HCT116 (cell line): ENCODE measurements at regions of chr6 and their contacts with region 1.

Region 1: DNA sequence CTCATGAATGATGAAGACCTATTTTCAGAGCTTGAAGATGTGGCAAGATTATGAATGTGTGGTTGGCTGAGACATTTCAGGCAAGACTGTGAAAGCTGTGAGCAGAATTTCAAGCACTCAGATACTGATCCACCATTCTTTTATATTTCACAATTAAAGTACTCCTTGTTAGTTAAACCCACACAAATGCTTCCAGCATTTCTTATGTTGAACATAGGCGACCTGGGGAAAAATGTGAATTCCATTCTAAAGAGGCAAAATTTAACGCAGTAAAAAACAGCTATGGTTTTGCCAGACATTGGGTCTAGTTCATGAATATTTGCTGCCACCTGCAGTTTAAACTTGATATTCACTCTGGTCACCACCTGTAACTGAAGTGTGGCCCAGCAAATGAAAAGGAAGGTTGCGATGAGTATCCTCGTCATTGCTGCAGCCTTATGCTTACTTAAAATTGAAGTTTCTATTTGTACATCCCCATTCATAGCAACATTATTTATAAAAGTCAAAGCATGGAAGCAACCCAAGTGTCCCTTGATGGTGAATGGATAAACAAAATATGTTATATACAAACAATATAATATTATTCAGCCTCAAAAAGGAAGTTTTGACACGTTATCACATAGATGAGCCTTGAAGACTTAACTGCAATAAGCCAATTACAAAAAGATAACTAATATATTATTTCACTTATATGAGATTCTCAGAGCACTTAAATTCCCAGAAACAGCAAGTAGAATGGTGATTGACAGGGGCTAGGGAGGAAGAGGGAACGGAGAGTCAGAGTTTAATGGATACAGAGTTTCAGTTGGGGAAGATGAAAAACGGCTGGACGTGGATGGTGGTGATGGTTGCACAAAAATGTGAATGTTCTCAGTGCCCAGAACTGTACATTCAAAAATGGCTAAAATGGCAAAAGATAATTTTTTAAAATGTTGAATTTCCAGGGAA is 32.4 kb upstream of the FAM184A start:
- DNase-seq: peak; percentile 44
- ATAC-seq: peak; percentile 96
- H3K4me3 ChIP-seq: no peak overlapping the region
- H3K27ac ChIP-seq: no peak overlapping the region
- H3K4me1 ChIP-seq: no peaks in the 10 kb centered on the region
- H3K27me3 ChIP-seq: no peaks in the 10 kb centered on the region
- CTCF ChIP-seq: peak; percentile 41 to 76 (median 65); a peak in 5 of 6 replicates
- POLR2A ChIP-seq: no peak
- RAD21 ChIP-seq: peak; percentile 91

Region 2: DNA sequence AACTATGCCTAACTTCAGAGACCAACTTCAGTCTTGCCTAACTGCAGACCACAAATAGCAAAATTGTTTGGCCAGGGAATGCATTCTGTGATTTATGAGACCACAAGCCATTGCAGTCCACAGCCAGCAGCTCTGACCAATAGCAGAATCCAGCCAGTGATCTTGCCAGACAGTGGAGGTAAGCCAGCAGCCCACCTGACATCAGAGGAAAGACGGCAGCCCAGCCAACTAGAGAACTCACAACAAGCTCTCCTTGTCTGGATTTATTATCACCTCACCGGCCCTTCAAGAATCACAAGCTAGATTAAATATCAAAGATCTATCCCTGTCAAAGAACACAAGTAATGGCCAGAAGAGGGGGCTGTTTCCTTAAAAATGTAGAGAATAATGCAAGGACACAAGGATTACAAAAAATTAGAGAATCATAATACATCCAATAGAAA is 1270.3 kb before region 1 on chr6:
- CTCF ChIA-PET with region 1: interaction called, 8 read pairs
- POLR2A ChIA-PET with region 1: no interaction called
- RAD21 ChIA-PET with region 1: no interaction called
- intact Hi-C with region 1: loop called (anchors 5 kb)
- DNase-seq: peak; percentile 68
- ATAC-seq: peak; percentile 82
- H3K4me3 ChIP-seq: no peak overlapping the region
- H3K27ac ChIP-seq: no peak overlapping the region
- H3K4me1 ChIP-seq: no peaks in the 10 kb centered on the region
- H3K27me3 ChIP-seq: no peaks in the 10 kb centered on the region
- CTCF ChIP-seq: peak; percentile 41 to 75 (median 73); a peak in 5 of 6 replicates
- POLR2A ChIP-seq: no peak
- RAD21 ChIP-seq: peak; percentile 83

Region 3: GRCh38 chr6:118565311-118565960 is 545.4 kb before region 1 on chr6:
- CTCF ChIA-PET with region 1: interaction called, 10 read pairs
- POLR2A ChIA-PET with region 1: no interaction called
- RAD21 ChIA-PET with region 1: no interaction called
- intact Hi-C with region 1: loop called (anchors 5 kb)
- DNase-seq: peak; percentile 18
- ATAC-seq: peak; percentile 66
- H3K4me3 ChIP-seq: no peak overlapping the region
- H3K27ac ChIP-seq: no peak overlapping the region
- H3K4me1 ChIP-seq: no peaks in the 10 kb centered on the region
- H3K27me3 ChIP-seq: no peaks in the 10 kb centered on the region
- CTCF ChIP-seq: peak; percentile 46 to 53 (median 50); a peak in 5 of 6 replicates
- POLR2A ChIP-seq: no peak
- RAD21 ChIP-seq: peak; percentile 70

Region 4: DNA sequence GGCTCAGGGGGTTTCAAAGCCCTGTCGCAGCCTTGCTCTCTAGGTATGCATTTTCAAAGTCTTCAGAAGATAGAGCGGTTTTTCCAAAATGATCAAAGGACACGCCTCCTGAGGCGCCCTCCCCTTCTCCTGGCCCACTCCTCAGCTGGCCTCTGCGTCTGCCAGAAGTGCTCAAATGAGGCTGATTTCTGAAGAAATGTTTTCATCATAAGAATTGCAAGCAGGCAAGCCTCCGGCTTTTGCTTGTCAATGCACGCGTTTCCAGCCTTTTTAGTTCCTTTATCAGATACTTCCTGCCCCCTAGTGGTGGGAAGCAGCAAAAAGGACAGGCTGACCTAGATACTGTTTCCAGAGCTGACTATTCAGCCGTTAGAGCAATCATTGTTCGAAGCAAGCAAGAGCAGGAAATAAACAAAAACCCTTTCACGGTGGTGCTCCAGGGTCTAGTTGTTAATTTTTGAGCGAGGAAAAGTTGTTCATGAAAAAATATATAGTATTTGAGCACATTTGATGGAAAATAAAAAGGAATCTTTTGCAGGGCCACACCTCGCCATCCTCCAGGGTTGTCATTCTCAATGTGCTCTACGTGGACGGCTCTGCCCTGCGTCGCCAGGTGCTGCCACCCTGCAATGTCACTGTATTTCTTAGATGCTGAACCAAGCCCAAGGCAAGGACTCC is 310.3 kb before region 1 on chr6:
- CTCF ChIA-PET with region 1: interaction called, 4 read pairs
- POLR2A ChIA-PET with region 1: no interaction called
- RAD21 ChIA-PET with region 1: no interaction called
- intact Hi-C with region 1: loop called (anchors 10 kb)
- DNase-seq: peak; percentile 57
- ATAC-seq: peak; percentile 89
- H3K4me3 ChIP-seq: no peak overlapping the region
- H3K27ac ChIP-seq: no peak overlapping the region
- H3K4me1 ChIP-seq: peaks cover 0 to 10% of the 10 kb centered on the region in 2 experiments; a peak in 3 of 4 replicates
- H3K27me3 ChIP-seq: no peaks in the 10 kb centered on the region
- CTCF ChIP-seq: peak; percentile 54 to 95 (median 92); a peak in 5 of 6 replicates
- POLR2A ChIP-seq: no peak
- RAD21 ChIP-seq: peak; percentile 72

Region 5: DNA sequence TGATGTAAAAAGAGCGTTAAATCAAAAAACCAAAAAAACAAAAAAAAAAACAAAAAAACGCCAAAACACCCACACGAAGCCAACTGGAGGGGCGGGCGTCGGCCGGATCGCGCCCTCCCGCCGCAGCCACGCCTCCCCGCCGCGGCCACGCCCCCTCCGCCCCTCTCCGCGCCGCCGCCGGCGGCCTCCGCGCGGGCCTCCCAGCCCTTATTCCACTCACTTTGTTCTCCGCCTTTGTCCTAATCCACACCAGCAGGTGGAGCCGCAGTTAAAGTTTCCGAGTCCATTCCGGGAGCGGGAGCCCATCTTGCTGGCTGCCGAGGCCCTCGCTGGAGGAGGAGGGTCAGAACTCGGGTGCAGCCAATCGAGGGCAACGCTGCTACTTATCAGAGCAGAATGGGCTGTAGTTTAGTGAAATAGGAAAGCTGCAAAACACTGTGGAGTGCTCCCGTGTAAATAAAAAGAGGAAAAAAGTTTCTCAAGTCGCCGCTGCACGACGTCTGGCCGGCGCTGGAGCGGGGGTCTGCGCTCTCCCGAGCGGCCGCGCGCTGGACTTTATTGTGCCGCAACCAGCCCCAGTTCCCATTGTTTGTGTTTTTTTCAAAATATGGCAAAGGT is 217.0 kb before region 1 on chr6 and contains the start of gene ASF1A:
- CTCF ChIA-PET with region 1: interaction called, 9 read pairs
- POLR2A ChIA-PET with region 1: interaction called, 4 read pairs
- RAD21 ChIA-PET with region 1: no interaction called
- intact Hi-C with region 1: loop called (anchors 1 kb)
- DNase-seq: peak; percentile 96
- ATAC-seq: peak; percentile 87
- H3K4me3 ChIP-seq: peak within 1 kb of the TSS; percentile 56 to 93
- H3K27ac ChIP-seq: peak within 1 kb of the TSS; percentile 85
- H3K4me1 ChIP-seq: peaks cover 12 to 21% of the 10 kb centered on the region in 2 experiments
- H3K27me3 ChIP-seq: no peaks in the 10 kb centered on the region
- CTCF ChIP-seq: peak; percentile 44 to 58 (median 57); a peak in 4 of 6 replicates
- POLR2A ChIP-seq: peak; percentile 92
- RAD21 ChIP-seq: peak; percentile 52
- total RNA-seq, gene ASF1A: 23.3 TPM

Region 6: DNA sequence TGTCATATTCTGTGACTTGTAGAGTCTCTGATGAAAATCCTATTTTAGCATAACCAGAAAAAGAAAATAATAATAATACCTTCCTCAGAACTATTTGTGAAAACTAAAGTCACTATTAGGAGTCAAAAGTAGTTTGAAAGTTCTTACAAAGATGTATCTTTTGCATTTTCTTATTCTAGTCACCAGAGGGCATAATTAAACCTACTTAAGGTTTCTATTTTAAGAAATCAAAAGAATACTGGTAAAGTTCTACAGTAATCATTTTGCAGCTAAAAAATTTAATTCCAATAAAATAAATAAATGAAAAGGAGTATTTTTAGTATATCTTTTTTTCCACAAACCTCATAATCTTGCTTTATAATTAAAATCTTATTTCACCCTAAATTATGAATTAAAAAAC is 147.9 kb before region 1 on chr6:
- CTCF ChIA-PET with region 1: interaction called, 113 read pairs
- POLR2A ChIA-PET with region 1: no interaction called
- RAD21 ChIA-PET with region 1: interaction called, 8 to 16 read pairs
- intact Hi-C with region 1: loop called (anchors 1 kb)
- DNase-seq: peak; percentile 7
- ATAC-seq: no peak
- H3K4me3 ChIP-seq: no peak overlapping the region
- H3K27ac ChIP-seq: no peak overlapping the region
- H3K4me1 ChIP-seq: peaks cover 0 to 10% of the 10 kb centered on the region in 2 experiments; a peak in 1 of 4 replicates
- H3K27me3 ChIP-seq: no peaks in the 10 kb centered on the region
- CTCF ChIP-seq: peak in 1 of 3 experiments; percentile 42; a peak in 2 of 6 replicates
- POLR2A ChIP-seq: no peak
- RAD21 ChIP-seq: peak; percentile 53; the same call in 1 of the 2 replicates

Region 7: GRCh38 chr6:118968416-118968815 is 142.5 kb before region 1 on chr6:
- CTCF ChIA-PET with region 1: interaction called, 113 read pairs
- POLR2A ChIA-PET with region 1: interaction called, 7 read pairs
- RAD21 ChIA-PET with region 1: interaction called, 8 to 16 read pairs
- intact Hi-C with region 1: loop called (anchors 1 kb)
- DNase-seq: peak; percentile 12
- ATAC-seq: no peak
- H3K4me3 ChIP-seq: no peak overlapping the region
- H3K27ac ChIP-seq: no peak overlapping the region
- H3K4me1 ChIP-seq: no peaks in the 10 kb centered on the region
- H3K27me3 ChIP-seq: no peaks in the 10 kb centered on the region
- CTCF ChIP-seq: peak in 2 of 3 experiments; percentile 41 to 53; a peak in 2 of 6 replicates
- POLR2A ChIP-seq: no peak
- RAD21 ChIP-seq: peak; percentile 70